ENCODE measurements at regions of chr3 and their contacts with region 1.

Region 1: GRCh38 chr3:13346481-13347389 is 73.4 kb downstream of the NUP210 start:
- DNase-seq: peak; percentile 82
- H3K4me3 Mint-ChIP-seq: no peak overlapping the region
- H3K27ac Mint-ChIP-seq: peak overlapping the region; percentile 69
- H3K4me1 Mint-ChIP-seq: peaks cover 49% of the 10 kb centered on the region
- H3K27me3 Mint-ChIP-seq: no peaks in the 10 kb centered on the region

Region 2: GRCh38 chr3:13166243-13167063 is 180.3 kb before region 1 on chr3:
- CTCF ChIA-PET with region 1: no interaction called
- POLR2A ChIA-PET with region 1: no interaction called
- DNase-seq: no peak
- H3K4me3 Mint-ChIP-seq: no peak overlapping the region
- H3K27ac Mint-ChIP-seq: no peak overlapping the region
- H3K4me1 Mint-ChIP-seq: no peaks in the 10 kb centered on the region
- H3K27me3 Mint-ChIP-seq: peaks cover 2% of the 10 kb centered on the region

Region 3: DNA sequence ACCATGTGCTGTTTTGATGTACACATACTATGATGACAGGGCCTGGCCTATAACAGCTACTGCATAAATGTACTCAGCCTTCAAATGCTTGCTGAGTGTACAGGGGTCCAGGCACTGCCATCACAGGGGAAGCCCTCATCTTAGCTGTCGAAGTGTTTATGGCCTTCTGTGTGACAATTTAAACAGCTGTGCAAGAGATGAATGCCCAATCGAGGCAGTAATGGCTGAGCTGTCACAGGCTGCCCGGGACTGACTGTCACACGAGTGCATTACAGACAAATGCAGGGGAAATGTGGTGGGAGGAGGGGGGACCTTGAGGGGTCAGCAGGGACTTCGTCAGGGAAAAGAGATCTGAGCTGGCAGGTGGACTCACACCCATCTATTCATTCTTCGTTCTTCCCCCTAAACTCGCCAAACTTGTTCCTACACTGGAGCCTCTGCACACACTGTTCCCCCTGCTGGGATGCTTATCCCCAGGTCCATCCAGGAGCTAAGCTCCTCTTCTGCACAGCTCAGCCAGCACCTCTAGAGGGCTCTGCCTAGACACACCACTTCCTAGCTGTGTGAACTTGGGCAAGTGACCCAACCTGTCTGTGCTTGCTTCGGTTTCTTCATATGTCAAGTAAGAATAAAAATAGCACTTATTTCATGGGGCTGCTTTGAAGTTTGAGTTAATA is 117.3 kb before region 1 on chr3:
- CTCF ChIA-PET with region 1: interaction called, 15 read pairs
- POLR2A ChIA-PET with region 1: interaction called, 3 read pairs
- DNase-seq: peak; percentile 31
- H3K4me3 Mint-ChIP-seq: no peak overlapping the region
- H3K27ac Mint-ChIP-seq: no peak overlapping the region
- H3K4me1 Mint-ChIP-seq: peaks cover 22% of the 10 kb centered on the region
- H3K27me3 Mint-ChIP-seq: peaks cover 15% of the 10 kb centered on the region

Measured in activated CD4-positive, alpha-beta memory T cell treated with anti-CD3 and anti-CD28 coated beads, Interleukin-2, amount 10 ng/mL, durations not matched to agents 7 days and 5 days (primary cell).